GM12878 (cell line): ENCODE measurements at regions of chr11 and their contacts with region 1.

Region 1: DNA sequence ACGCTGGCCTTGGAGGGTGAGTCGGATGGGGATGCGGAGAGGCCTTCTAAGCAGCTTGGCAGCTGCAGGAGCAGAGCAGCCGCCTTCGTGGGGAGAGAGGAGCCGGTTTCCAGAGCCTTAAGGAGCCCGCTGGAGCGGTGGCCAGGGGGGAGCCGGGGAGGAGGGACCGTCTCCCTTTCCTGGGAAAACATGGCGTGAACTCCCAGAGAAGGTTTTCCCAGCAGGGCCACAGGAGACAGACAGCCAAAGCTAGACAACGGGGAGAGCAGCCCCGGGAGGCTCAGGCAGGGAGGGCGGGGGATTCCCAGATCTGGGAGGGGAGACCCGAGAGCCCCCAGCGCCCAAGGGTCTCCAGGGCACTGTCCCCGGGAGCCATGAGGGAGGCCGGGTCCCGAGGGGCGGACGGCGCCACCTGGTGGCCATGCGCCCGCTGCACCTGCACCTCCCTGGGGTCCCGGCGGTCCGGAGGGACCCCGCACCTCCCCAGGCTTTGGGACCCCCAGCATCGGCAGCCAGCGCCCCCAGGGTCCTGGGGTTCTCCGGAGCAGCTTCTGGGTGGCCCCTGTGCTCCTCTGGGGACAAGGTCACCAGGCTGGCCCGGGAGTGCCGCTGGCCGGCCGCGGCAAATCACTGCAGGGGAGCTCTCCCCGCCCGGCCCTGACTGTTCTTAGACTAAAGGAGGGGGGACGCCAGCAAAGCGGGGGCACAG is 2.4 kb upstream of the SYT8 start:
- DNase-seq: no peak
- ATAC-seq: peak; percentile 81
- H3K4me3 ChIP-seq: no peak overlapping the region
- H3K27ac ChIP-seq: no peak overlapping the region
- H3K4me1 ChIP-seq: no peaks in the 10 kb centered on the region
- H3K27me3 ChIP-seq: no peaks in the 10 kb centered on the region; a peak in 2 of 4 replicates
- CTCF ChIP-seq: peak; percentile 76 to 95 (median 76)
- EP300 ChIP-seq: no peak
- POLR2A ChIP-seq: no peak
- RAD21 ChIP-seq: peak; percentile 68

Region 2: DNA sequence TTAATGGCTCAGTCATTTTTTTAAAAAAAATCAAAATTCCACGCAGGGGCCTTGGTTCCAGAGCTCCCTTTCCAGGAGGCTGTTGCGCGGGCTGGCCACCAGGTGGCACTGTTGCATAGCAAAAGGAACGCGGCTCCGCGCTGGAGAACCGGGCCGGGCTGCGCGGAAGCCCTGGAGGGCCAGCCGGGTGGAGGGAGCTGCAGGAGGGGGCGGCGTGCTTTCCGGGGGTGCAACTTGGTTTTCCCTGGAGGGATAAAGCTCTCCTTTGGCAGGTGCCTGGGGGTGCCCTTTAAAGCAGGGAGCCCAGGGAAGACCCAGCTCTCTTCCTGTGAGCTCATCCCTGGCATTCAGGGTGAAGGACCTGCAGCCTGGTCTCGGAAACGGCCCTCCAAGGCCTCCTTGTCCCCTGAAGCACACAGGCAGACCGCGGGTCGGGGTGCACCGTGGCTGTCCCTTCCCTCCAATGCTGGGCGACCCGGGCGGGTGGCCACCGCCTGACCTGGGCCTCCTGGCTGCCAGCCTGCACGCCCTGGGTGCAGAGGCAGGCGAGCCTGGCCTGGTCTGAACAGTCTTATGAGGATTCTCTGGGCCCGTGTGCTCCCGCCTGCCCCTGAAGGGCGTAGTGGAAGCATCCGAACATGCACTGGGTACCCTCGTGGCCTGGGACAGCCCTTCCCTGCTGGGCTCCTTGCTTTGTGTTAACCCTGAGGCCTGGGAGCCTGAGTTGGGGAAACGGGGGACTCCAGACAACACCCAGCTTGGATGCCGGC is 179.4 kb before region 1 on chr11:
- CTCF ChIA-PET with region 1: interaction called, 56 read pairs
- POLR2A ChIA-PET with region 1: no interaction called
- RAD21 ChIA-PET with region 1: interaction called, 23 read pairs
- SMC1A ChIA-PET with region 1: interaction called, 4 read pairs
- in situ Hi-C with region 1: no loop called
- intact Hi-C with region 1: loop called (anchors 5 kb)
- DNase-seq: no peak
- ATAC-seq: peak; percentile 97
- H3K4me3 ChIP-seq: no peak overlapping the region
- H3K27ac ChIP-seq: no peak overlapping the region
- H3K4me1 ChIP-seq: no peaks in the 10 kb centered on the region
- H3K27me3 ChIP-seq: peaks cover 0 to 3% of the 10 kb centered on the region in 2 experiments; a peak in 2 of 4 replicates
- CTCF ChIP-seq: peak; percentile 90 to 94 (median 91)
- EP300 ChIP-seq: no peak
- POLR2A ChIP-seq: no peak
- RAD21 ChIP-seq: peak; percentile 83

Region 3: GRCh38 chr11:1706634-1707400 is 125.5 kb before region 1 on chr11:
- CTCF ChIA-PET with region 1: interaction called, 11 read pairs
- POLR2A ChIA-PET with region 1: no interaction called
- RAD21 ChIA-PET with region 1: interaction called, 5 read pairs
- SMC1A ChIA-PET with region 1: interaction called, 4 read pairs
- in situ Hi-C with region 1: no loop called
- intact Hi-C with region 1: no loop called
- DNase-seq: no peak
- ATAC-seq: peak; percentile 38; the same call in 2 of the 3 replicates
- H3K4me3 ChIP-seq: no peak overlapping the region
- H3K27ac ChIP-seq: no peak overlapping the region
- H3K4me1 ChIP-seq: peaks cover 14% of the 10 kb centered on the region
- H3K27me3 ChIP-seq: peaks cover 0 to 2% of the 10 kb centered on the region in 2 experiments; a peak in 1 of 4 replicates
- CTCF ChIP-seq: peak; percentile 17 to 23 (median 17); a peak in 2 of 6 replicates
- EP300 ChIP-seq: no peak
- POLR2A ChIP-seq: no peak
- RAD21 ChIP-seq: no peak

Region 4: DNA sequence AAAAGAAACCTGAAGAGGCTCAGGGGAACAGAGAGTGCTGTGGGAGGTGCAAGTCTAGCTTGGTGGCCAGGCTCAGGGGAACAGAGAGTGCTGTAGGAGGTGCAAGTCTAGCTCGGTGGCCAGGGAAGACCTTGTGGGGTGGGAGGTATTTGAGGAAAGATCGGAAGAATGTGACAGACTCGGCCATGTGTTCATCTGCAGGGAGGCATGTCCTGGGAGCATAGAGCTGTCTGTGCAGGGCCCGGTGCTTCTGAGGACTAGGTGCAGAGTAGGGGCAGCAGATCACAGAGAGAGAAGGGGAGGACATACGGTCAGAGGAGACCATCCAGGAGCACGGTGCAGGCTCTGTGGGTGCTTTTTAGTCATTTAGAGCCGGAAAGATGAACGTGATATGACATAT is 92.8 kb before region 1 on chr11:
- CTCF ChIA-PET with region 1: no interaction called
- POLR2A ChIA-PET with region 1: no interaction called
- RAD21 ChIA-PET with region 1: no interaction called
- SMC1A ChIA-PET with region 1: no interaction called
- in situ Hi-C with region 1: no loop called
- intact Hi-C with region 1: no loop called
- DNase-seq: no peak
- ATAC-seq: no peak
- H3K4me3 ChIP-seq: no peak overlapping the region
- H3K27ac ChIP-seq: no peak overlapping the region
- H3K4me1 ChIP-seq: no peaks in the 10 kb centered on the region
- H3K27me3 ChIP-seq: no peaks in the 10 kb centered on the region
- CTCF ChIP-seq: no peak
- EP300 ChIP-seq: no peak
- POLR2A ChIP-seq: no peak
- RAD21 ChIP-seq: no peak

Region 5: GRCh38 chr11:1757861-1758610 is 74.3 kb before region 1 on chr11:
- CTCF ChIA-PET with region 1: no interaction called
- POLR2A ChIA-PET with region 1: no interaction called
- RAD21 ChIA-PET with region 1: no interaction called
- SMC1A ChIA-PET with region 1: no interaction called
- in situ Hi-C with region 1: no loop called
- intact Hi-C with region 1: no loop called
- DNase-seq: no peak
- ATAC-seq: peak; percentile 28; the same call in 2 of the 3 replicates
- H3K4me3 ChIP-seq: no peak overlapping the region
- H3K27ac ChIP-seq: no peak overlapping the region
- H3K4me1 ChIP-seq: peaks cover 6% of the 10 kb centered on the region
- H3K27me3 ChIP-seq: no peaks in the 10 kb centered on the region
- CTCF ChIP-seq: no peak
- EP300 ChIP-seq: no peak
- POLR2A ChIP-seq: no peak
- RAD21 ChIP-seq: no peak

Region 6: DNA sequence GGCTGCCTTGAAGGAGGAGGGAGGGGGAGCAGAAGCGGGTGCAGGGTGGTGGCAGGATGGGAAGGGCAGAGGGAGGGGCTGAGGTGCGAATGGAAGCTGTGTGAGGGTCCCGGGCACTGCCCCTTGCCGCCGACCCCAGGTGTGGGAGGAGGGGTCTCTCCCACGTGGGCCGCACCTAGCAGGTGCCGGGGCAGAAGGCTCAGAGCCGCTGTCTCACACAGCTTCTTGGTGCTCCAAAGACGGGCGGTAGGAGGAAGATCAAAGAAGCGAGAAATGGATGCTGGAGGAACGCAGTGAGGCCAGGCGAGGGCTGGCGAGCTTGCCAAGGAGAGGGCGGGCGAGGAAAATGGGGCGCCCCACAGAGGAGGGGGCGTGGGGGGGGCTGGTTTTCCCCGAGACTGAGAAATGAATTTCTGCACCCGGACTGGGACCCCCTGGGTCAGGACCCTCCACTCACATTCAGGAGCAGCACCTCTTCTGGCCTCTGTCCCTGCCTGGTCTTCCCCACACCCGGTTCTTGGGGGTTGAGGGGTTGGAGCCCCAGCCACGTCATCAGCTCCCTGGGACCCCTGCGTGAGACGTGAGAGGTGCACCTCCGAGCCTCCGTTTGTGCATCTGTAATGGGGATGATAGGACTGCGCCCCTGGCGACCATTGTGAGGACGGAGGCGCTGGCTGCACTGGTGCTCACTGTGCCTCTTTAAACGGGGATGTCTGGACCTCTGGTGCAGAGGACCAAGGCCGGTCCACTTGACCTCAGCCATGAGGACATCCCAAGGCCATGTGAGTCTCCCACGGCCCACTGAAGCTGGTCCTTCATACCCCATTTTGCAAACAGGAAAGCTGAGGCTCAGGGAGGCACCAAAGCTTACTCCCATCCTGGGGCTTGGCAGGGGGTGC is 37.3 kb after region 1 on chr11:
- CTCF ChIA-PET with region 1: no interaction called
- POLR2A ChIA-PET with region 1: no interaction called
- RAD21 ChIA-PET with region 1: no interaction called
- SMC1A ChIA-PET with region 1: no interaction called
- in situ Hi-C with region 1: no loop called
- intact Hi-C with region 1: no loop called
- DNase-seq: no peak
- ATAC-seq: no peak
- H3K4me3 ChIP-seq: no peak overlapping the region
- H3K27ac ChIP-seq: no peak overlapping the region
- H3K4me1 ChIP-seq: no peaks in the 10 kb centered on the region
- H3K27me3 ChIP-seq: no peaks in the 10 kb centered on the region
- CTCF ChIP-seq: no peak
- EP300 ChIP-seq: no peak
- POLR2A ChIP-seq: no peak; the same call in 1 of the 2 replicates
- RAD21 ChIP-seq: no peak

Region 7: DNA sequence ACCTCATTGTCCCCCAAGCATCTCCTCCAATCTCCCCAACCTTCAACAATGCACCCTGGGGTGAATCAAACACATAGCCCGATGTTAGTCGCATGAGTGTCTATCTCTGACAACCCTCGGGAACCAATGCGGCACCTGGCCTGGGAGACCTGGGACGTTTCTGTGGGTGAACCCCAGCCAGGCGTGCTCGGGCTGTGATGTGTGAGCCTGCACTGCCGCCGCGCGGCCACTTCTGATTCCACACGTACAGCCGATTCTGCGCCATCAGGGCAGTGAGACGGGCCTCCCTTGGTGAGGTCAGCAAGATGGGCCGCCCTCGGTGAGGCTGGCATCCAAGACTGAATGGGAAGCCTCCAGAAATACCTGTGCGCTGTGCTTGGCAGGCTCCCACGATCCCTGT is 170.4 kb after region 1 on chr11:
- CTCF ChIA-PET with region 1: interaction called, 33 read pairs
- POLR2A ChIA-PET with region 1: interaction called, 3 read pairs
- RAD21 ChIA-PET with region 1: interaction called, 13 read pairs
- SMC1A ChIA-PET with region 1: interaction called, 17 read pairs
- in situ Hi-C with region 1: no loop called
- intact Hi-C with region 1: no loop called
- DNase-seq: no peak
- ATAC-seq: peak; percentile 79
- H3K4me3 ChIP-seq: no peak overlapping the region
- H3K27ac ChIP-seq: no peak overlapping the region
- H3K4me1 ChIP-seq: no peaks in the 10 kb centered on the region
- H3K27me3 ChIP-seq: no peaks in the 10 kb centered on the region
- CTCF ChIP-seq: no peak
- EP300 ChIP-seq: no peak
- POLR2A ChIP-seq: no peak
- RAD21 ChIP-seq: no peak